AG04450 (cell line): ENCODE measurements at regions of chr12 and their contacts with region 1.

Region 1: GRCh38 chr12:2812290-2813213 is at the start of gene ITFG2:
- DNase-seq: peak; percentile 94
- H3K4me3 ChIP-seq: peak within 1 kb of the TSS; percentile 98
- H3K27ac ChIP-seq: peak within 1 kb of the TSS; percentile 96
- H3K27me3 ChIP-seq: no peaks in the 10 kb centered on the region
- CTCF ChIP-seq: no peak
- polyA plus RNA-seq, gene ITFG2: 17.4 and 18.6 TPM in 2 replicates

Region 2: GRCh38 chr12:2739817-2740641 is 72.5 kb before region 1 on chr12:
- CTCF ChIA-PET with region 1: interaction called, 12 read pairs
- POLR2A ChIA-PET with region 1: no interaction called
- DNase-seq: peak; percentile 1
- H3K4me3 ChIP-seq: no peak overlapping the region
- H3K27ac ChIP-seq: no peak overlapping the region
- H3K27me3 ChIP-seq: peaks cover 31% of the 10 kb centered on the region
- CTCF ChIP-seq: peak; percentile 62

Region 3: GRCh38 chr12:2860170-2860569 is 47.6 kb after region 1 on chr12:
- CTCF ChIA-PET with region 1: no interaction called
- POLR2A ChIA-PET with region 1: no interaction called
- DNase-seq: no peak
- H3K4me3 ChIP-seq: no peak overlapping the region
- H3K27ac ChIP-seq: no peak overlapping the region
- H3K27me3 ChIP-seq: no peaks in the 10 kb centered on the region
- CTCF ChIP-seq: no peak